ENCODE measurements at regions of chr16 and their contacts with region 1.

Region 1: DNA sequence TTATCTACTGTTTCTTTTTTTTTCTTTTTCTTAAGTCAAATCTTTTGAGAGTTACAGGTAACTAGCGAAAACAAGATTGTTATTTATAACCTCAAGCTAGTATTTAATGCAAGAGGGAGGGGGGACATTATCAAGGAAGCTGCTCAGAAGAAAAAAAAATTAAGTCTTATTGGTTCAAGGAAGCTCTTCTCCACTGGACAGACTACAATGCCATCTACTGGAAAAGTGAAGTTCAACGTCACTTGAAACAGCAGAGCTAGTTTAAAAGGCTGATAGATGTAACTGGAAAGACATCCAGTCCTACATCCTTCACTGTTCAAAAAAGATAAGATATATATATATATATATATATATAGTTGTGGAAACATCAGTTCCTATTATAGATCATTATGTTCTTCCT is 418.0 kb upstream of the PSMD7 start:
- DNase-seq: peak in 4 of 7 donors; percentile 7 to 24 (median 14)
- H3K4me3 ChIP-seq: no peak overlapping the region
- H3K27ac ChIP-seq: no peak overlapping the region
- H3K4me1 ChIP-seq: peaks cover 0 to 3% of the 10 kb centered on the region in 2 donors
- H3K27me3 ChIP-seq: no peaks in the 10 kb centered on the region
- CTCF ChIP-seq: peak; percentile 41 to 68 (median 66)
- POLR2A ChIP-seq: no peak

Region 2: GRCh38 chr16:72501739-72502593 is 1376.6 kb before region 1 on chr16:
- intact Hi-C with region 1: loop called in 1 of 2 experiments (anchors 10 kb)
- DNase-seq: peak; percentile 53 to 80 (median 58)
- H3K4me3 ChIP-seq: no peak overlapping the region
- H3K27ac ChIP-seq: no peak overlapping the region
- H3K4me1 ChIP-seq: no peaks in the 10 kb centered on the region
- H3K27me3 ChIP-seq: no peaks in the 10 kb centered on the region
- CTCF ChIP-seq: peak; percentile 55 to 85 (median 78)
- POLR2A ChIP-seq: no peak

Region 3: DNA sequence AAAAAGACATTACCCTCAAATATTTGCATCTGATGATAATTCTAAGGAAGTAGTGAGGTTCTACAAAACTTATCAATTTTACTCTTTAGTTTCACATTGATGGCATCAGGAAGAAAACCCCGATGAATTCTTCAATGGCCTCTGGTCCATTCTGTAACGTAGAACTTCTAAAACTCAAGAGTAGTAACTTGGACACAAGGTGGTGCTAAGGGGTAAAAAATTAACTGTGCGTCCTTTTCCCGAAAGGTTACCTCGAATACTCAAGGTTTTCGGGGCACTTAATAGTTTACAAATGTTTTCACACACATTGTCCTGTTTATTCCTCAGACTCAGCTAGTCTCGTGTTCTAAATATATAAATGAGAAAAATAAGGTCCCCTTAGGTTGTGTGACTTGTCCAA is 313.3 kb before region 1 on chr16:
- intact Hi-C with region 1: loop called in 1 of 2 experiments (anchors 10 kb)
- DNase-seq: no peak
- H3K4me3 ChIP-seq: no peak overlapping the region
- H3K27ac ChIP-seq: no peak overlapping the region
- H3K4me1 ChIP-seq: no peaks in the 10 kb centered on the region
- H3K27me3 ChIP-seq: no peaks in the 10 kb centered on the region
- CTCF ChIP-seq: peak in 4 of 6 experiments; percentile 22 to 42 (median 41)
- POLR2A ChIP-seq: no peak

Region 4: GRCh38 chr16:73713778-73714495 is 164.7 kb before region 1 on chr16:
- intact Hi-C with region 1: loop called in 1 of 2 experiments (anchors 5 kb)
- DNase-seq: peak; percentile 37 to 71 (median 62)
- H3K4me3 ChIP-seq: no peak overlapping the region
- H3K27ac ChIP-seq: no peak overlapping the region
- H3K4me1 ChIP-seq: no peaks in the 10 kb centered on the region
- H3K27me3 ChIP-seq: no peaks in the 10 kb centered on the region
- CTCF ChIP-seq: peak; percentile 37 to 58 (median 52)
- POLR2A ChIP-seq: no peak

Region 5: GRCh38 chr16:73725156-73725555 is 153.5 kb before region 1 on chr16:
- intact Hi-C with region 1: loop called in 1 of 2 experiments (anchors 10 kb)
- DNase-seq: no peak
- H3K4me3 ChIP-seq: no peak overlapping the region
- H3K27ac ChIP-seq: no peak overlapping the region
- H3K4me1 ChIP-seq: no peaks in the 10 kb centered on the region
- H3K27me3 ChIP-seq: no peaks in the 10 kb centered on the region
- CTCF ChIP-seq: no peak
- POLR2A ChIP-seq: no peak

Region 6: DNA sequence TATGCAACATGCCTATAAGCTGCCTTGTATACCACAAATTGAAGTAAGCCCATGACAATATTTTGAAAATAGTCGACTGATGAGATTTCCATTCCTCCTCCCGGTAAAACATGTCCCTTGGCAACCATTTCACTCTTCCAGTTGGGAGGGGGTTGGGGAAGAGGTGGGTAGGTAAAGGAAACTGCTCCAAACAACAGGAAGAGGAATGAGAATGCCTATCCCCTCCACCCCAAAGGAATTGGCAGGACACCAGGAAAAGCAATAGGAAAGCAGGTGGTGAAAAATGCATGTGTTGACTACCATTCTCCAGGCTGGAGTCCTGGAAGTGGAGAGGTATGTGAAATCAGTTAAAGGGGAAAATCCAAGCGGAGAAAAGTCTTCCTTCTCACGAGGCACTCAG is 37.9 kb before region 1 on chr16:
- intact Hi-C with region 1: no loop called
- DNase-seq: no peak
- H3K4me3 ChIP-seq: no peak overlapping the region
- H3K27ac ChIP-seq: no peak overlapping the region
- H3K4me1 ChIP-seq: no peaks in the 10 kb centered on the region
- H3K27me3 ChIP-seq: no peaks in the 10 kb centered on the region
- CTCF ChIP-seq: no peak
- POLR2A ChIP-seq: no peak

Region 7: GRCh38 chr16:73916829-73917594 is 38.4 kb after region 1 on chr16:
- intact Hi-C with region 1: no loop called
- DNase-seq: no peak
- H3K4me3 ChIP-seq: no peak overlapping the region
- H3K27ac ChIP-seq: no peak overlapping the region
- H3K4me1 ChIP-seq: no peaks in the 10 kb centered on the region
- H3K27me3 ChIP-seq: no peaks in the 10 kb centered on the region
- CTCF ChIP-seq: no peak
- POLR2A ChIP-seq: no peak

Region 8: DNA sequence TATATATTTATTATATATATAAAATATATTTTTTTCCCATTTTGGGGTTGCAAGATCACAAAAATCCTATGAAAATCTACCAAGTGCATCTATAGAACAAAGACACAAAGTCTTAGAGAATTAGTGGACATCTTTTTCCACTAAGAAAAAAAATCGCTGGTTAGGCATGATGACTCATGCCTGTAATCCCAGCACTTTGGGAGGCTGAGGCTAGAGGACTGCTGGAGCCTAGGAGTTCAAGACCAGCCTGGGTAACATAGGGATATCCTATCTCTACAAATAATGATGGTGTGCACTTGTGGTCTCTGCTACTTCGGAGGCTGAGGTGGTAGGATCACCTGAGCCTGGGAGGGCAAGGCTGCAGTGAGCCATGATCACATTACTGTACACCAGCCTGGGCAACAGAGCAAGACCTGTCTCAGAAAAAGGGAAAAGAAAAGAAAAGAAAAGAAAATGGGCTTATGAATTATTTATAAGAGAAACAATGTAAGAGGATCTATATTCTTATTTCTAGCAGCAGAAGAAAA is 232.9 kb after region 1 on chr16:
- intact Hi-C with region 1: no loop called
- DNase-seq: no peak
- H3K4me3 ChIP-seq: no peak overlapping the region
- H3K27ac ChIP-seq: no peak overlapping the region
- H3K4me1 ChIP-seq: no peaks in the 10 kb centered on the region
- H3K27me3 ChIP-seq: no peaks in the 10 kb centered on the region
- CTCF ChIP-seq: no peak
- POLR2A ChIP-seq: no peak

Region 9: DNA sequence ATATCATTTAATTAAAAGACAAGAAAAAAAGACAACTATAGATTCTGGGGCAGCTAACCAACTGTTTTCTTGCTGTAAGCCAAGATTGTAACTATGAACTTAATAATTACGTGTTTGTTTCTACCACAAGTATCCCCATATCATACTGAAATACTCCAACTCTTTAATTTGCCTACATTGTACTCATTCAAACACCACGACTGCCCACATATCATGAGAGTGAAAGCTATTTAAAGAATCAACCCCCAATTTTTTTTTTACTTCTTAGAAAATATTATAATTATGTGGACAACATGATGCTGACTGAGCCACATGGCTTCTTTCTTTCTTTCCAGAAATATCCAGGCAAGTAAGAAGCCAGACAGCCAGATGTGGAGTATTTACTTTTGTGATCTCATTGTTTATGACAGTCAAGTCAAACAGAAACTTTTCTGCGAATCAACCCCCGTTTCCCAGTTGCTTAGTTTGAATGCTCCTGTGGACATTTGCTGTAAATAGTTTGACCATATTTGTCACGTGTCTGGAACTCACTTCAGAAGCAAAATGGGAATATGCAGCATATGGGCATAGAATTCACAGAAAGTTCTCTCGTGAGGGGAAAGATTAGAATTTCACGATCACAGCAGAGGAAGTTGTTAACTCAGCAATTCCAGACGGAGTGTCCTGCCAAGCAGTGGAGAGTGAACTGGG is 291.2 kb after region 1 on chr16:
- intact Hi-C with region 1: no loop called
- DNase-seq: no peak
- H3K4me3 ChIP-seq: peak overlapping the region in 1 of 4 donors; percentile 35
- H3K27ac ChIP-seq: no peak overlapping the region
- H3K4me1 ChIP-seq: no peaks in the 10 kb centered on the region
- H3K27me3 ChIP-seq: no peaks in the 10 kb centered on the region
- CTCF ChIP-seq: no peak
- POLR2A ChIP-seq: no peak